Heart right ventricle (tissue), 16 donors: ENCODE measurements at regions of chr16 and their contacts with region 1.

Region 1: DNA sequence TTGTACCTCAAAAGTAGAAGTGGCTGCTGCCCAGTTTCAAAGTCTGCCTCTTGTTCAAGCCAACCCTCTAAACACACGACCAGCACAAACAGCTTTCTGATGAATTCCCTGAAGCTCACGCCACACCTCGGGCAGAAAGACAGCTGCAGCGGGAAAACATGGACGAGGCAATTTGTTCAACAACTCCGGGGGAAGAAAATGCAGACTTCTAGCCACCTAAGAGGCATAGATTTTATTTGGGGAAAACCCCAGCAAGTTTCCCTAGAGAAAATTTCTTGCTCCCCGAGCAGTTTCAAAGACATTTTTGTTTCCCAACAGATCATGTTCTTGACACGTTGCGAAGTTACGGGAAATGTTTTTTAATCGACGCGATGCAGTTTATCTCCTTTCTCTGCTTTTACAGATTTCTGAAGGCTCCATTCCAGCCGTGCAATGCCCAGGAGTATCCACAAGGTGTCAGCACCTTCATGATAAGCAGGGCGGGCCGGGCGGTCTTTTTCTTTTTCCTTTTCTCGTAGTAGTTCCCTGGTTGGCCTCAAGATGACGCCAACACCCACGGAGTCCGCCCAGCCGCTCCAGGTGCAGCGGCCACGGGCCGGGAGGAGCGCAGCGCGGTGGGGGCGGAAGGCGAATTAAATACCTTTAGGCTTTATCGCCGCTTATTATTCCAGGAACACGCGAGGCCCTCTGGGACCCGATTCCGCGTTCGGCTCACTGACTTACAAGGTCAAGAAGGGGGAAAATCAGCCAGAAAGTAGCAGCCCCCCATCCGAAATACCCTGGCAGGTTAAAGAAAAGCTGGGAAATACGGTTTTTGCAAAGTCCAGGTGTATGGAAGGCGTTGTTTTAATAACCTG is 2.9 kb upstream of the FOXC2 start:
- DNase-seq: peak; percentile 80 to 89
- ATAC-seq: peak; percentile 40 to 85 (median 74)
- H3K4me3 ChIP-seq: peak overlapping the region in 4 of 10 donors; percentile 10 to 37 (median 19)
- H3K27ac ChIP-seq: peak overlapping the region in 3 of 10 donors; percentile 5 to 44 (median 41)
- H3K4me1 ChIP-seq: peaks cover 0 to 26% (median 11%) of the 10 kb centered on the region in 9 donors
- H3K27me3 ChIP-seq: peaks cover 9 to 86% (median 60%) of the 10 kb centered on the region in 7 donors
- CTCF ChIP-seq: peak; percentile 100

Region 2: GRCh38 chr16:86252596-86252995 is 311.1 kb before region 1 on chr16:
- intact Hi-C with region 1: no loop called
- DNase-seq: no peak
- ATAC-seq: no peak
- H3K4me3 ChIP-seq: no peak overlapping the region
- H3K27ac ChIP-seq: no peak overlapping the region
- H3K4me1 ChIP-seq: no peaks in the 10 kb centered on the region
- H3K27me3 ChIP-seq: peaks cover 0 to 17% (median 0%) of the 10 kb centered on the region in 7 donors
- CTCF ChIP-seq: peak in 5 of 9 donors; percentile 7 to 40 (median 24)

Region 3: GRCh38 chr16:86834451-86835035 is 270.8 kb after region 1 on chr16:
- intact Hi-C with region 1: loop called in 2 of 10 experiments (anchors 10 kb)
- DNase-seq: peak in 1 of 2 donors; percentile 27
- ATAC-seq: peak in 3 of 8 donors; percentile 18 to 42 (median 27)
- H3K4me3 ChIP-seq: no peak overlapping the region
- H3K27ac ChIP-seq: no peak overlapping the region
- H3K4me1 ChIP-seq: peaks cover 0 to 7% (median 4%) of the 10 kb centered on the region in 9 donors
- H3K27me3 ChIP-seq: no peaks in the 10 kb centered on the region
- CTCF ChIP-seq: peak in 5 of 9 donors; percentile 10 to 32 (median 24)

Region 4: GRCh38 chr16:87062569-87063442 is 499.1 kb after region 1 on chr16:
- intact Hi-C with region 1: loop called (anchors 1 to 5 kb)
- DNase-seq: peak; percentile 73
- ATAC-seq: peak; percentile 88 to 93 (median 90)
- H3K4me3 ChIP-seq: peak overlapping the region in 3 of 10 donors; percentile 3 to 21 (median 15)
- H3K27ac ChIP-seq: no peak overlapping the region
- H3K4me1 ChIP-seq: peaks cover 0 to 16% (median 2%) of the 10 kb centered on the region in 9 donors
- H3K27me3 ChIP-seq: peaks cover 0 to 43% (median 21%) of the 10 kb centered on the region in 7 donors
- CTCF ChIP-seq: peak; percentile 63 to 83 (median 79)

Region 5: GRCh38 chr16:87203060-87203656 is 639.4 kb after region 1 on chr16:
- intact Hi-C with region 1: loop called in 1 of 10 experiments (anchors 10 kb)
- DNase-seq: peak in 1 of 2 donors; percentile 67
- ATAC-seq: peak in 6 of 8 donors; percentile 23 to 52 (median 50)
- H3K4me3 ChIP-seq: no peak overlapping the region
- H3K27ac ChIP-seq: no peak overlapping the region
- H3K4me1 ChIP-seq: peaks cover 0 to 11% (median 0%) of the 10 kb centered on the region in 9 donors
- H3K27me3 ChIP-seq: peaks cover 0 to 13% (median 0%) of the 10 kb centered on the region in 7 donors
- CTCF ChIP-seq: peak; percentile 24 to 84 (median 69)

Region 6: GRCh38 chr16:87297918-87298631 is 734.4 kb after region 1 on chr16:
- intact Hi-C with region 1: loop called in 3 of 10 experiments (anchors 5 kb)
- DNase-seq: no peak
- ATAC-seq: peak in 5 of 8 donors; percentile 35 to 56 (median 49)
- H3K4me3 ChIP-seq: no peak overlapping the region
- H3K27ac ChIP-seq: no peak overlapping the region
- H3K4me1 ChIP-seq: no peaks in the 10 kb centered on the region
- H3K27me3 ChIP-seq: no peaks in the 10 kb centered on the region
- CTCF ChIP-seq: peak; percentile 13 to 72 (median 62)